ENCODE measurements at regions of chr15 and their contacts with region 1.

Region 1: DNA sequence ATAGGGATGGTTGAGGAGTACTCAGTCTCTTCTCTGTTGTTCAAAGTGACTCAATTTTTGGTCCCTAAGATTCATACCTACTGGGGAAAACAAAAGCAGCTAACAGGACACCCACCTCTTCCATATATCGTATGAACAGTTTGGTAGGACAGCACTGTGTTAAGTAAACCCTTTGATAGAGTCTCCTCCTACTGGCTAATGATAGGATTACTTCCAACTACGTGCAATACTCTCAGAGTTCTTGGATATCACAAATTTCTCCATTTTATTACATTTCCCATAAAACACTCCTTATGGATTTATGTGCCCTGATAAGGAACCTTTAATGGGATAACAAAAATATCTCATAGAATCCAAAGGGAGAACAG is 200.2 kb upstream of the GOLGA6L4 start:
- DNase-seq: no peak
- ATAC-seq: peak; percentile 76

Region 2: GRCh38 chr15:83559310-83559966 is 475.9 kb before region 1 on chr15:
- intact Hi-C with region 1: loop called (anchors 10 kb)
- DNase-seq: no peak
- ATAC-seq: peak; percentile 64

Region 3: DNA sequence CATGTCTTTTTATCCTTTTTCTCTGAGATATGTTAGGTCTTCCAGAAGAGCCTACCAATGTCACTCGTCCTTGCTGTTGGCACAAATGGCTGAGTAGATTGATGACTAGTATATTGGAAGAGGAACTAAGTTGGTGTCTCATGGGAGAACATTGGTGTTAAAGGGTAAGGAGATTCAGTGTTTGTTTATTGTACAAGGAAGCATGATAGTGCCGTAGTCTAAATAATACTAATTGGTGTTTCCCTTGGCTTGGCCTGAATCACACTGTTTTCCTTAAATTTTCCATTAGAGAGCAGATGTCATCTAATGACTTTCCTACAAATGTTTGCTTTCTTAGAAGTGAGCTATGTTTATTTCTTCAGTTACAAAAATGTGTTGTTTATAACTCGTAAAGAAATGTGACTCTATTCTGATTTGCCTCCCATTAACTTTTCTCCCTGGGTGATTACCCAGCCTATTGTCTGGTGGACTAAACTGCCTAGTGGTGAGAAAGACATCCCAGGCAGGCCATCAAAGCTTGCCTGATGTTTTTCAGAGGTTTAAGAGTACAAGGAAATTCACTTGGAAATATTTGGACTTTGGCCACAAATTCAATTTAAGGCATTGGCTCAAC is 352.8 kb before region 1 on chr15:
- intact Hi-C with region 1: no loop called
- DNase-seq: no peak
- ATAC-seq: no peak

Region 4: DNA sequence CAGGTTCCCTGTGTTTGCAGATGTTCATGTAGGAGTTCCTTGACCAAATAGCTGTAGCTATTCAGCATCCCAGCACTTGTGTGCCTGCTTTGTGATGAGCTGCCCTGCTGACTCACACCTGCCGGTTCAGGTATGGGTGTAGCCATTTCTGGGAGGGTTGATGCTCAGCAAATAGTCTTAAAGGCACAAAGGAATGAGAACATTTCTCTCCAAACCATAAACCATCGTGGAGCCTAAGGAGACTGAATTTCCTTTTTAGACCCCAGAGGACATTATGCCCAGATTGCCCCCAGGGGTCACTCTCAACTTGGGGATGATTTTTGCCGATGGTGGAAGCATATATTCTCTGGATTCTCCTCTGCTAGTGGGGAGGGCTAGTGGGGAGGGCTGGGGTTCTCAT is 300.9 kb before region 1 on chr15:
- intact Hi-C with region 1: loop called (anchors 5 kb)
- DNase-seq: no peak
- ATAC-seq: peak; percentile 57

Region 5: DNA sequence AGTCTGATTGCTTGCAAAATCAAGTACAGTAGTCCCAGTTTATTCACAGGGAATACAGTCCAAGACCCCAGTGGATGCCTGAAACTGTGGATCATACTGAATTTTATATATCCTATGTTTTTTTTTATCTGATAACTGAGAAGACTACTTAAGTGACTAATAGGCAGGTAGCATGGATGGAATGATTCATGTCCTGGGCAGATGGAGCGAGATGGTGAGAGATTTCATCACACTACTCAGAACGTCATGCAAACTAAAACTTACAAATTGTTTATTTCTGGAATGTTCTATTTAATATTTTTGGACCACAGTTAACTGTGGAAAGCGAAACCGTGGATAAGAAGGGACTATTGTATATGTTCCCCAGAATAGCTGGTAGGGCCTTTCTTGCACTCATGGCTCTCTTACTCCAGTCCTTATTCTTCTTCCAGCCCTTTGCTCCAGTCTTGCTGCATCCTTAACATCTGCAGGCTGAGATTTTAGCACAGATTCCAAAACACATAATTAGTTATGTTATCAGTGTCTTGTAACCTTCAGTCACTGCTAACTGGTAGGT is 91.5 kb before region 1 on chr15:
- intact Hi-C with region 1: no loop called
- DNase-seq: no peak
- ATAC-seq: no peak